Activated CD4-positive, alpha-beta T cell treated with anti-CD3 and anti-CD28 coated beads, Interleukin-2, amount 10 ng/mL, durations not matched to agents 24 days and 14 days (primary cell): ENCODE measurements at regions of chrX and their contacts with region 1.

Region 1: DNA sequence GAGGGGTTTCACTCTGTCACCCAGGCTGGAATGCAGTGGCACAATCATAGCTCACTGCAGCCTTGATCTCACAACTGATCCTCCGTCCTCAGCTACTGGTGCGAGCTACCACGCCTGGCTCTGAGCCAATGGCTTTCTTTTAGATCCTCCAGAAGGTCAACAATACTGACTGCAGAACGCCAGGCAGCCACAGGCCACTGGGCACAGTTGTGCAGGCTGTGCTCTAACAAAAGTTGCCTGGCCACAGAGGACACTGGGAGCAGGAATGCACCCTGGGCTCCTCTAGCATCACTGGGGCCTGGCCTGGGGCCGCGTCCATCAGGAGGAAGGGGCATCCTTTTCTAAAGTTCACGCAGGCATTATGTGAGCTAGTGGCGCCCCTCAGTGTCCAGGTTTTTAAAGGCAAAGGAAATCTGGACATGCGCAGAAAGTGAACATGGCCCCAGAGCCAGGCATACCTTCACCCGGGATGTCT is 14.9 kb upstream of the PORCN start:
- DNase-seq: no peak
- H3K4me3 Mint-ChIP-seq: no peak overlapping the region
- H3K27ac Mint-ChIP-seq: no peak overlapping the region
- H3K4me1 Mint-ChIP-seq: peaks cover 3% of the 10 kb centered on the region
- H3K27me3 Mint-ChIP-seq: no peaks in the 10 kb centered on the region

Region 2: DNA sequence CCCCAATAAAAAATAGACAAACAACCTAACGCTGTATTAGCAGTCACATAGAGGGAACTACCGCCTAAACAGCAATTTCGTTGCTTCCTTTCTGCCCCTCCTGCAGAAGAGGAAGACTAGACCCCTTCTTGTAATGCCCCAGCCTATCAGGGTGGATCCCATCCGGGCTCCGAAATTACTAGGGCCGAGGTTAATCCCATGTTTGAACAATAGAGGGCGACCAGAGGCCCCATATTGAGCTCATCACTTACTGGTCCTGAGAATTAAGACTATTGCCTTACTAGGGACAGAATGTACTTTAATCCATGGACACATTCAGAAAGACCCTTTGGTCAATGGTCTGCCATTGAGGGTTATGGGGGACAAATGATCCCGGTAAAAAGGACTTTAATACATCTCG is 410.7 kb before region 1 on chrX:
- intact Hi-C with region 1: loop called (anchors 10 kb)
- DNase-seq: peak; percentile 77
- H3K4me3 Mint-ChIP-seq: no peak overlapping the region
- H3K27ac Mint-ChIP-seq: no peak overlapping the region
- H3K4me1 Mint-ChIP-seq: no peaks in the 10 kb centered on the region
- H3K27me3 Mint-ChIP-seq: no peaks in the 10 kb centered on the region